Endothelial cell of umbilical vein (primary cell): ENCODE measurements at regions of chr3 and their contacts with region 1.

Region 1: GRCh38 chr3:143443851-143444331 is 324.3 kb downstream of the CHST2 start:
- DNase-seq: peak; percentile 98
- H3K4me3 ChIP-seq: no peak overlapping the region
- H3K27ac ChIP-seq: peak overlapping the region; percentile 98
- H3K4me1 ChIP-seq: peaks cover 25% of the 10 kb centered on the region
- H3K27me3 ChIP-seq: no peaks in the 10 kb centered on the region
- CTCF ChIP-seq: no peak
- POLR2A ChIP-seq: peak; percentile 62

Region 2: DNA sequence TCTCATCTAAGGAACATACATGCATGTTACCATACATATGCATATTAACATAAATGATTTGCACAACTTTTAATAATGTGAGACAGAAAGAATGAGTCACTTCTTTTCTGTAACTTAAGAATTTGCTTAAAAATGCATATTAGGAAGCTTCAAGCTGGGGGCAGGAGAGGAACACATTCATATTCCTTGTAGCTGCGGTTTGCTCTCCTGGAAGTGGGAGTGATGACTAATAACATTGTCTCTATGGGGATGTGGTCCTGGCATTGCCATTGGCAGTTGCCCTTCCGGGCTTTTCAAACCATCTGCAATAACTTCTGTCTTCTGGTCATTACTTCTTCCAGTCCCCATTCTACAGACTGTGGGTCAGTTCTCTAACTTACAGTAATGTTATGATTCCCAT is 308.7 kb before region 1 on chr3:
- CTCF ChIA-PET with region 1: interaction called, 3 read pairs
- POLR2A ChIA-PET with region 1: no interaction called
- dilution Hi-C with region 1: no loop called
- intact Hi-C with region 1: loop called (anchors 1 kb)
- DNase-seq: peak; percentile 81
- H3K4me3 ChIP-seq: no peak overlapping the region
- H3K27ac ChIP-seq: peak overlapping the region; percentile 19
- H3K4me1 ChIP-seq: peaks cover 26% of the 10 kb centered on the region
- H3K27me3 ChIP-seq: no peaks in the 10 kb centered on the region
- CTCF ChIP-seq: no peak
- POLR2A ChIP-seq: peak; percentile 56

Region 3: GRCh38 chr3:143329567-143330211 is 114.2 kb before region 1 on chr3:
- CTCF ChIA-PET with region 1: interaction called, 6 read pairs
- POLR2A ChIA-PET with region 1: no interaction called
- dilution Hi-C with region 1: no loop called
- intact Hi-C with region 1: loop called (anchors 1 kb)
- DNase-seq: peak; percentile 62
- H3K4me3 ChIP-seq: no peak overlapping the region
- H3K27ac ChIP-seq: no peak overlapping the region
- H3K4me1 ChIP-seq: peaks cover 37% of the 10 kb centered on the region
- H3K27me3 ChIP-seq: no peaks in the 10 kb centered on the region
- CTCF ChIP-seq: peak in 1 of 2 donors; percentile 5
- POLR2A ChIP-seq: no peak

Region 4: GRCh38 chr3:143578810-143579435 is 135.0 kb after region 1 on chr3:
- CTCF ChIA-PET with region 1: no interaction called
- POLR2A ChIA-PET with region 1: no interaction called
- dilution Hi-C with region 1: no loop called
- intact Hi-C with region 1: loop called (anchors 1 kb)
- DNase-seq: no peak
- H3K4me3 ChIP-seq: no peak overlapping the region
- H3K27ac ChIP-seq: no peak overlapping the region
- H3K4me1 ChIP-seq: peaks cover 18% of the 10 kb centered on the region
- H3K27me3 ChIP-seq: no peaks in the 10 kb centered on the region
- CTCF ChIP-seq: no peak
- POLR2A ChIP-seq: no peak